ENCODE measurements at regions of chr4 and their contacts with region 1.

Region 1: GRCh38 chr4:142838774-142839173 is 7.3 kb downstream of the INPP4B start:
- DNase-seq: no peak
- ATAC-seq: no peak

Region 2: DNA sequence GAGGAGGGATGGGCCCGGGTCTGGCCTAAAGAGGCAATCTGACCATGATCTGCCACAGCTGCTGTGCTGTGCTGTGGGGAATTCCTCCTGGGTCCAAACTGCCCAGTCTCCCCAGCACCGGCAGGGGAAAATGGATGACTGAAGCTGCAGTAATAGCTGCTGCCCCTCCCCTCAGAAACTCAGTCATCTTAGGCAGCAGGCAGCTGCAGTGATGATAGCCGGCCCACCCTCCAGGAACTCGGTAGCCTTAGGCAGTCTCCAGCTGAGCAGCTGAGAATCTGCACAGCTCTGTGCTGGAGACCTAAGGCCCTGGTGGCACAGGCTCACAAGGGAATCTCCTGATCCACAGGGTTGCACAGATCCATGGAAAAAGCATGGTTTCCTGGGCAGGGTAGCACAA is 232.6 kb after region 1 on chr4:
- intact Hi-C with region 1: loop called (anchors 5 kb)
- DNase-seq: no peak
- ATAC-seq: peak; percentile 42

Region 3: GRCh38 chr4:143089296-143089695 is 250.5 kb after region 1 on chr4:
- intact Hi-C with region 1: no loop called
- DNase-seq: no peak
- ATAC-seq: no peak

Region 4: GRCh38 chr4:143118663-143119062 is 279.9 kb after region 1 on chr4:
- intact Hi-C with region 1: no loop called
- DNase-seq: no peak
- ATAC-seq: no peak

Measured in sciatic nerve (tissue), 2 donors.